ENCODE measurements at regions of chr9 and their contacts with region 1.

Region 1: GRCh38 chr9:70602321-70603019 is 188.0 kb upstream of the KLF9 start:
- DNase-seq: peak; percentile 54
- CTCF ChIP-seq: peak; percentile 67

Region 2: DNA sequence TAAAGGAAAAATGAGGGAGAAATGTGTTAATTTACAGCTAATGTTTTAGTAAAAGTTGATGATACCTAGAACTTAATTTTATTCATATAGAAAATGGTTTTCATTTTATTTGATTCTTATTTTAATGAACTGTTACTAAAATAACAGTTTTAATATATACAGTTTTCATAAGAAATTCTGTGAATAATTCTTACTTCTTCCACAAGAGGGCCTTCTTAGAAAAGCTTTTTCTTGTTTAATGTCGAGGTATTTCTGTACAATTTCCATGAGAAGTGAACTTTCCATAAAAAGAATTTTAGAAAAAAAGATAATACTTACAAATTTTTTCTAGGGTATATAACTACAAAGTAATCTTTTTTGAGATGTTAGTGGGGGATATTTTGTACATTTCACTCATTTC is 261.9 kb before region 1 on chr9:
- CTCF ChIA-PET with region 1: interaction called, 26 read pairs
- POLR2A ChIA-PET with region 1: no interaction called
- DNase-seq: peak; percentile 19
- CTCF ChIP-seq: no peak

Region 3: DNA sequence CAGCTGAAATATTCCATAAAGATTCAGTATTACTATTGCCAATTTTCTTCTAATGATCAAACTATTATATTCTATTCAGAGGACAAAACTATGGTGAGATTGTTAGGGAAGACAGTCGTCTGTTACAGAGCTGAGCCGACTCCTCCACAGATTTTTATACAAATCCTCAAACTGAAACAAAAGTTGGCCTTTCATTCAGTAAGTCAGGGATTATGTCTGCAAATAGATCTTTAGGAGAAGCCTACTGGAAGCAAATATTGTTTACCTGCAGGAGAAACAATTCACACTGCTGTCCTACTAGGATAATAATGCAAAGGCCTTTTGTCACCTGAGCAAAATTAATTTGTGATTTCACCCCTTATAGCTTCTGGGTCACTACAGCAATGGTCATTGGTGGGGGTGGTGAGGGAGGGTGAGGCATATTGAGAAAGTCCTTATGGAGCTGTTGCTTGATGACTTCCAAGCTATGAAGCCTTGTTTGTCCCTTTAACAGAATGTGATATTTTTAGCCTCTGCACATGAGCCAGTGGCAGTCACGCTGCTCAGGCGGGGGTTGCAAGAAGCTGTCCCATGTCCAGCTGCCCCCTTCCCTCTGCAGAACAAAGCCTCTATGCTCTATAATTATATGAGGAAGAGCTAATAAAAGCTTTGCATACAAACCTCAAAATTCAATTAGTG is 12.5 kb after region 1 on chr9:
- CTCF ChIA-PET with region 1: interaction called, 25 read pairs
- POLR2A ChIA-PET with region 1: no interaction called
- DNase-seq: no peak
- CTCF ChIP-seq: no peak

Region 4: DNA sequence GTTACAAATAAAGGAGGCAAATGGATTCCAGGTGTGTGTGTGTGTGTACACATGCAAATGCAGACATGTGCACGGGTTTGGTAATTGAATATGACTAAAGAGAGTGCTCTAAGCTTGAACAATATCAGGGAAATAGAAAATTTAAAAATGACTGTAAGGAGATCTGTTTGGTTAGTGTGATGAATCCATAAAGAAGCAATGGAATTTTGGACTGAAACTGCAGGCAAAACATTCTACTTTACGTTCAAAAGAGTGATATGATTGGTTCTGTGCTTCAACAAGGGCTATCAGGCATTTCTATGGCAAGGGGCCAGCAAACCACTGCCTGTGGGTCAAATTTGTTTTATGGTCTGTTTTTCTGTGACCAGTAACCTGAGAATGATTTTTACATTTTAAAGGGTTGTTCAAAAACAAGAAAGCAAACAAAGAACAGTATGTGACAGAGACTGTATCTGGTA is 144.8 kb after region 1 on chr9:
- CTCF ChIA-PET with region 1: no interaction called
- POLR2A ChIA-PET with region 1: no interaction called
- DNase-seq: no peak
- CTCF ChIP-seq: no peak